Activated CD8-positive, alpha-beta memory T cell treated with anti-CD3 and anti-CD28 coated beads, Interleukin-2, amount 10 ng/mL, durations not matched to agents 7 days and 5 days (primary cell): ENCODE measurements at regions of chr5 and their contacts with region 1.

Region 1: DNA sequence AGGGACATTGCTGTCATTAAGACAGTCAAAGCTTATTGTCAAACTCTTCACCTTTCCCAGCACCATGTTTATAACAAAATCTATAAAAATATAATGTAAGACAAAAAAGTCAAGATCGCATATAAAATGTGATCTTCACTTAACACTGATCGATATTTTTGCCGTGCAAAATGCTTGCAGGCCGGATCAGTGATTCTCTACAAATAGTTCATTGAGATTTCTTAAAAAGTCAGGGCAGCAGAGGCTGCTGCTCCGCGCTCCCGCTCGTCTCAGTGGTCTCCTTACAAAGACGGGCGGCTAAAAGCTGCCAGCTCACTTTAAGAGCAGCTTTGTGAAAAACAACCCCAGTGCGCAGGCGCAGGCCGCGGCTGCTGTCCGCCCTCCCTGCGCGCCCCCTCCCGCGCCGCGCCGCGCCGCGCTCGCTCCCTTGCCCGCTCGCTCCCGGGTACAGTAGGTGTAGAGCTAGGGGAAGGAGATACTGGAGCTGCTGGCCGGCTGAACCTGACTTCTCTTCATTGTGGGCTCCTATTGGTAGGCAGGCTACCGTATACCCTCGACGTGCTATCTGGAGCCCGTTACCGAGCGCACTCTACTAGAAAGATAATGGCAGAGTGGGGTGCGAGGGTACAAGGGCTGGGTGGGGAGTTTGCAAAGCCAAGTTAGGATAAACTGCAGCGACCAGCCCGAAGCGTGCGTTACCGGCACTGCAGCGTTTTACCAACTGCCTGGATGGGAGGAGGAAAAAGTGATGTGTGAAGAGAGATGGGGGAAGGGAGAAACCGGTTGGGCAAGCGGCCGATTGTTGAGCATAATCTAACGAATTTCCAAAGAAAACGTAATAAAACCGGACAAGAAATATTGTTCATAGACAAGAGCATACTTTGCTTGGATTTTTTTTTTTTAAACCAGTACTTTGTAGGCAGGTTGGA is at the start of gene ARRDC3:
- DNase-seq: peak; percentile 98
- ATAC-seq: peak; percentile 61
- H3K4me3 Mint-ChIP-seq: peak within 1 kb of the TSS; percentile 88
- H3K27ac Mint-ChIP-seq: peak within 1 kb of the TSS; percentile 100
- H3K4me1 Mint-ChIP-seq: peaks cover 24% of the 10 kb centered on the region
- H3K27me3 Mint-ChIP-seq: no peaks in the 10 kb centered on the region
- total RNA-seq, gene ARRDC3: 13.5 to 42.8 TPM

Region 2: GRCh38 chr5:90932052-90932699 is 451.1 kb before region 1 on chr5:
- CTCF ChIA-PET with region 1: interaction called, 16 read pairs
- DNase-seq: peak; percentile 44
- ATAC-seq: no peak
- H3K4me3 Mint-ChIP-seq: no peak overlapping the region
- H3K27ac Mint-ChIP-seq: no peak overlapping the region
- H3K4me1 Mint-ChIP-seq: no peaks in the 10 kb centered on the region
- H3K27me3 Mint-ChIP-seq: peaks cover 9% of the 10 kb centered on the region

Region 3: GRCh38 chr5:91183737-91184136 is 199.6 kb before region 1 on chr5:
- CTCF ChIA-PET with region 1: interaction called, 14 read pairs
- DNase-seq: no peak
- ATAC-seq: no peak
- H3K4me3 Mint-ChIP-seq: no peak overlapping the region
- H3K27ac Mint-ChIP-seq: no peak overlapping the region
- H3K4me1 Mint-ChIP-seq: peaks cover 11% of the 10 kb centered on the region
- H3K27me3 Mint-ChIP-seq: peaks cover 27% of the 10 kb centered on the region

Region 4: DNA sequence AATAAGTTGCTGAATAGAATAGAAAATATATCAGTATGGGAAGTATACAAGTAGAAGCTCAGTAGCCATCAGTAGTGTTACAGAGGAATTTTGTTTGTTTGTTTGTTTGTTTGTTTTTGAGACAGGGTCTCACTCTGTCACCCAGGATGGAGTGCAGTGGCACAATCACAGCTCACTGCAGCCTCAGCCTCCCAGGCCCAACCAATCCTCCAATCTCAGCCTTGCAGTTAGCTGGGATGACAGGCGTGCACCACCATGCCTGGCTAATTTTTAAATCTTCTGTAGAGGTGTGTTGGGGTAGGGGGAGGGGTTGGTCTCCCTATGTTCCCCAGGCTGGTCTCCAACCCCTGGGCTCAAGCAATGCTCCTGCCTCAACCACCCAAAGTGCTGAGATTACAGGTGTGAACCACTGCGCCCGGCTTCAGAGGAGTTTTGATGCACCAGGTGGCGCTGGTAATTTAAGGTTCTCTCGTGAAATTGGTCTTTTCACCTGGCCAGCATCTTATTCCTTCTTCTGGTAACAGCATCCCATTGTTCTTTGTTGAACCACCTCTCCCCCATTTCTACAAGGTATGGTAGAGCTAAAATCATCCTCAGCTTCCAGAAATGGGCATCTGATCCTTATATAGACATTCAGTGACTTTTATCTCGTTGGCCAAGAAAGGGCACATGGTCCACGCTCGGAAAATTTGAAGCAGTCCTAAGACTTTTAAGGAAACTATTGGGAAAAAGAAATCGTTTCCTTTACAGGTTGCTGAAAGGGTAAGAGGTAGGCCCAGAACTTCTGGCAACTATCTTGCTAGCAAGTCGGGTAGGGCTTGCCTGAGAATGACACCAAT is 157.2 kb before region 1 on chr5:
- CTCF ChIA-PET with region 1: interaction called, 163 read pairs
- DNase-seq: peak; percentile 73
- ATAC-seq: peak; percentile 68
- H3K4me3 Mint-ChIP-seq: no peak overlapping the region
- H3K27ac Mint-ChIP-seq: no peak overlapping the region
- H3K4me1 Mint-ChIP-seq: no peaks in the 10 kb centered on the region
- H3K27me3 Mint-ChIP-seq: peaks cover 18% of the 10 kb centered on the region

Region 5: GRCh38 chr5:91266184-91266705 is 117.0 kb before region 1 on chr5:
- CTCF ChIA-PET with region 1: interaction called, 51 read pairs
- DNase-seq: no peak
- ATAC-seq: peak; percentile 87
- H3K4me3 Mint-ChIP-seq: no peak overlapping the region
- H3K27ac Mint-ChIP-seq: peak overlapping the region; percentile 63
- H3K4me1 Mint-ChIP-seq: peaks cover 28% of the 10 kb centered on the region
- H3K27me3 Mint-ChIP-seq: peaks cover 4% of the 10 kb centered on the region

Region 6: GRCh38 chr5:91311697-91312501 is 71.4 kb before region 1 on chr5:
- CTCF ChIA-PET with region 1: interaction called, 33 read pairs
- DNase-seq: peak; percentile 88
- ATAC-seq: peak; percentile 72
- H3K4me3 Mint-ChIP-seq: peak overlapping the region; percentile 61
- H3K27ac Mint-ChIP-seq: peak overlapping the region; percentile 94
- H3K4me1 Mint-ChIP-seq: peaks cover 50% of the 10 kb centered on the region
- H3K27me3 Mint-ChIP-seq: no peaks in the 10 kb centered on the region

Region 7: DNA sequence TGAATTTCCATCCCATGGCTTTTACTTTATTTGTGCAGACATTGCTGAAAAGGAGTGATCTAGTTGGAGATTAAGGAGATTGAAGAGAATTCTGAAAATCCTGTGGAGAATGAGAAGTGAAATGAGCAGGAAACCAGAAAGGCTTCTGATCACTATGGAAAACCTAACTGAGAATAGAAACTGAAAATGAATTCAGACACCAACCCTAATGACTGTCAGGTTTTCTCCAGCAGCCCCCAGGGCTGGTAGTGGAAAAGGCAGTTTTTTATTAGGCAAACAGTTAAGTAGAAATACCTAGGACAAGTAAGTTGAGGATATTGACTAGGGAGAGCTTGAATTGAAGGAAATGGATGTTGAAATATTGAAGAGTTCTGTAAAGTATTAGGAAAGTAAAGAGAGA is 14.5 kb after region 1 on chr5:
- CTCF ChIA-PET with region 1: interaction called, 15 read pairs
- DNase-seq: no peak
- ATAC-seq: peak; percentile 83
- H3K4me3 Mint-ChIP-seq: peak overlapping the region; percentile 49
- H3K27ac Mint-ChIP-seq: peak overlapping the region; percentile 89
- H3K4me1 Mint-ChIP-seq: peaks cover 18% of the 10 kb centered on the region
- H3K27me3 Mint-ChIP-seq: no peaks in the 10 kb centered on the region